ENCODE measurements at regions of chr21 and their contacts with region 1.

Region 1: GRCh38 chr21:29298348-29299045 is at the start of gene BACH1:
- DNase-seq: peak; percentile 93
- H3K4me3 Mint-ChIP-seq: peak within 1 kb of the TSS; percentile 85
- H3K27ac Mint-ChIP-seq: peak within 1 kb of the TSS; percentile 89
- H3K4me1 Mint-ChIP-seq: peaks cover 64% of the 10 kb centered on the region
- H3K27me3 Mint-ChIP-seq: no peaks in the 10 kb centered on the region
- total RNA-seq, gene BACH1: 22.9 to 23.0 TPM

Region 2: GRCh38 chr21:28992526-28993292 is 305.8 kb before region 1 on chr21 and contains the start of gene LTN1:
- CTCF ChIA-PET with region 1: no interaction called
- POLR2A ChIA-PET with region 1: no interaction called
- intact Hi-C with region 1: loop called (anchors 1 kb)
- DNase-seq: peak; percentile 100
- H3K4me3 Mint-ChIP-seq: peak within 1 kb of the TSS; percentile 93
- H3K27ac Mint-ChIP-seq: peak within 1 kb of the TSS; percentile 95
- H3K4me1 Mint-ChIP-seq: peaks cover 48% of the 10 kb centered on the region
- H3K27me3 Mint-ChIP-seq: no peaks in the 10 kb centered on the region
- total RNA-seq, gene LTN1: 26.7 to 29.1 TPM

Region 3: DNA sequence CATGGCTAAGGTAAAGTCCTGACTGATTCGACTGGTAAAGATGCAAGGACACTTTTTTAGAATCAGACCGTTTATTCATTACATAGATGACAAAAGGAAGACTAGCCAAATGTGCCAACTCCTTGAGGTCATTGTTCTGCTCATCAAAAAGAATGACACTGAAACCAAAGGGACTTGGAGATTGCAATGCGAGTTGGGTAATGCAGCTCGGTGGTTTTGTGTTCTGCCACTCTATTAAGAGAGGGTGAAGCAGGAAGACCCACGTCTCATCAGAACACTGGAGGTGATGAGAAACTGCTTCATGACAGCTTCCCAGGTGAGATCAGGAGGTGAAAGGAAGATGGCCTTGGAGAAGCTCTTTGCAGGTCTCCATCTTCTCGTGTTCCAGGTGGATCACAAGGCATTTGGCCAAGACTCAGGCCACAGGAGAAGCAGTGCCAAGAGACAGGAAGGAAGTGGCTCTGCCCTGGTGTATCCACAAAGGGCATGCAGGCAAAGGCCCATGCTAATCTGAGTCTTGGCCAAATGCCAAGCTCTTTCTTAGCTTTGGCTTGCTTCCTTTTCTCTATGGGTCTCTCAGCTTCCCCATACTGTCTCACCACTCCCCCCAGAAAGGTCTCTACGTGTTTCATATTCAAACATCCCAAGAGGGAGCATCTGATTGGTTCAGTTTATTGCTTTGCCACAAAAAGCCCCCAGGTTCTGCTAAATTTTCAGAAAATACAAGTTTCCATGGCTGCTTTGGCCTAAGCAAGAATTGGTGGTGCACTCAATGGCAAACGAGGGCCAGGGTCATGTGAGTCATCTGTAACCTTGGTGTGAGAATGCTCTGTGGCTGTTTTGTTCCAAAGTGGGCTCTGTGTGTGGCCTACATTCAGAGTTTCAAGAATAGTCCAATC is 219.4 kb before region 1 on chr21:
- CTCF ChIA-PET with region 1: interaction called, 3 read pairs
- POLR2A ChIA-PET with region 1: interaction called, 26 read pairs
- intact Hi-C with region 1: loop called (anchors 1 kb)
- DNase-seq: peak; percentile 66
- H3K4me3 Mint-ChIP-seq: peak overlapping the region; percentile 84
- H3K27ac Mint-ChIP-seq: peak overlapping the region; percentile 81
- H3K4me1 Mint-ChIP-seq: peaks cover 58% of the 10 kb centered on the region
- H3K27me3 Mint-ChIP-seq: no peaks in the 10 kb centered on the region

Region 4: GRCh38 chr21:29181799-29182470 is 116.6 kb before region 1 on chr21:
- CTCF ChIA-PET with region 1: no interaction called
- POLR2A ChIA-PET with region 1: interaction called, 8 read pairs
- intact Hi-C with region 1: loop called (anchors 5 kb)
- DNase-seq: no peak
- H3K4me3 Mint-ChIP-seq: peak overlapping the region; percentile 59
- H3K27ac Mint-ChIP-seq: peak overlapping the region; percentile 82
- H3K4me1 Mint-ChIP-seq: peaks cover 17% of the 10 kb centered on the region
- H3K27me3 Mint-ChIP-seq: no peaks in the 10 kb centered on the region

Region 5: DNA sequence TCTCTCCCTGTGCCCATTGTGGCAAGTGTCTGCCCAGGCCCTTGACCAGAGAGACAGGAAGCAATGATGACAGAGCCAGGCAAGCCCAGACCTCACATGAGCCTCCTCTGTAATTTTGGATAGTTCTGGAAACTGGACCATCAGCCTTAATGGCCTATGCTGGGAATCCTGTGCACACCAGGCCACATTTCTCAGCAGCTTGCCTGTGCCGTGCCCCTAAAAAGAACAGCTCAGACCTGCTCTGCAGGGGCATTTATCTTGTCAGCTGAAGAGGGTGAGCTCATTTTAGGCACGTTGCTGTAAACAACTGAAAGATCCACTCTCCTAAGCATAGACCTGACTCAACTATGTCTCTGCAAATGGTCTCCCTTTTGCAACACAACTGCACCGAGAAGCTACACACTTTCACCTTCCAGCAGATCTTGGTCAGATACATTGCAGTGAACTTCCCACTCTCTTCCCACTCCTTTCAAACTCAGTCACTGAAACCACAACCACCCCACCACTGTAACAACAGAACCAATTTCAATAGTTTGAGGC is 53.3 kb before region 1 on chr21:
- CTCF ChIA-PET with region 1: interaction called, 16 read pairs
- POLR2A ChIA-PET with region 1: interaction called, 25 read pairs
- intact Hi-C with region 1: loop called (anchors 1 kb)
- DNase-seq: peak; percentile 65
- H3K4me3 Mint-ChIP-seq: no peak overlapping the region
- H3K27ac Mint-ChIP-seq: no peak overlapping the region
- H3K4me1 Mint-ChIP-seq: peaks cover 12% of the 10 kb centered on the region
- H3K27me3 Mint-ChIP-seq: peaks cover 12% of the 10 kb centered on the region

Region 6: GRCh38 chr21:29372063-29372802 is 73.7 kb after region 1 on chr21:
- CTCF ChIA-PET with region 1: interaction called, 13 read pairs
- POLR2A ChIA-PET with region 1: interaction called, 17 read pairs
- intact Hi-C with region 1: loop called (anchors 1 kb)
- DNase-seq: peak; percentile 48
- H3K4me3 Mint-ChIP-seq: no peak overlapping the region
- H3K27ac Mint-ChIP-seq: peak overlapping the region; percentile 64
- H3K4me1 Mint-ChIP-seq: peaks cover 23% of the 10 kb centered on the region
- H3K27me3 Mint-ChIP-seq: no peaks in the 10 kb centered on the region

Region 7: DNA sequence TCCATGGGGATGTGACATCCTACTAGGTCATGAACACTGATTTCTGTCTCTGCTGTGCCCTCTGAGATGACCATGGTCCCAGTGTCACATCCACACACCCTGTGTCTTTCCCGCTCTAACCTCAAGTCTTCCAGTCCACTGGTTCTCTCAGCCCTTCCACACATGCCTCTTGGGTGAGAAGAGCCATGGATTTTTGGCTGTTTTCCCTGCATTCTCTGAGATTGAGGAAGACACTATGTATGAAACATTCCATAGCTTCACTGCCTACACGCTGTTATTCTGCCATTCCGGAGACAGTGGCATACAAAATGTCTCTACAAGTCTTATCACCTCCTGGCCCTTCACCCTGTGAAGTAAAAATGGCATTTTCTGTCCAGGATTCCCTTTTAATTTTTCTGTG is 247.6 kb after region 1 on chr21:
- CTCF ChIA-PET with region 1: no interaction called
- POLR2A ChIA-PET with region 1: no interaction called
- intact Hi-C with region 1: no loop called
- DNase-seq: no peak
- H3K4me3 Mint-ChIP-seq: no peak overlapping the region
- H3K27ac Mint-ChIP-seq: no peak overlapping the region
- H3K4me1 Mint-ChIP-seq: no peaks in the 10 kb centered on the region
- H3K27me3 Mint-ChIP-seq: no peaks in the 10 kb centered on the region

Region 8: GRCh38 chr21:29718081-29718815 is 419.8 kb after region 1 on chr21:
- CTCF ChIA-PET with region 1: no interaction called
- POLR2A ChIA-PET with region 1: no interaction called
- intact Hi-C with region 1: no loop called
- DNase-seq: no peak
- H3K4me3 Mint-ChIP-seq: no peak overlapping the region
- H3K27ac Mint-ChIP-seq: no peak overlapping the region
- H3K4me1 Mint-ChIP-seq: no peaks in the 10 kb centered on the region
- H3K27me3 Mint-ChIP-seq: no peaks in the 10 kb centered on the region

Measured in activated CD4-positive, alpha-beta memory T cell treated with anti-CD3 and anti-CD28 coated beads for 36 hours (primary cell).